ENCODE measurements at regions of chr1 and their contacts with region 1.

Region 1: DNA sequence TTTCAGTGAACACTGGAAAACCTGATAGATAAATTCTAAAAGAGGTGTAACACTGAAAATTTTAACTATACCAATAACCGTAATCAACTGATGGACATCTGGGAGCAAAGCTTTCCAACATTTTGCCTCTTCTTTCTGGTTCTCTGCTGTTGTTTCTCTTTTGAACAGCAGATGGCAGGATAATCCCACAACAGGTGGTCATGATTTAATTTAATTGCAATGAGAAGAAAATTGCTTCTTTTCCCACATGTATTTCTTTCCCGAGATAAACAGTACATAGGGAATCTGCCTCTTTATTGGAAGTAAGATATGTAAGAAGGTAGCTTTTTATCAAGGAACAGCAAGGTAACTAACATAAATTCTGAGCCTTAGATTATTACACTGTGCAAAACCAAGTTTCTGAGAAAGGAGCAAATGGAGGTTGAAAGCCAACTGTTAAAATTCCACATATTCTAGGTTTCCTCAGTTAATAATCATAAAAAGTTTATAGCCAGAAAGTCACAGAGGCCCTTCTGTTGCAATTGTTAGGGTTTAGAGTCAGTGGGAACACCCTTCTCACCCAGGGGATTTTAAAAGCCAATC is 72.9 kb downstream of the RPS6KA1 start:
- DNase-seq: peak in 2 of 10 donors; percentile 31 to 42
- H3K4me3 ChIP-seq: peak overlapping the region in 3 of 59 donors; percentile 0 to 39 (median 34)
- H3K27ac ChIP-seq: peak overlapping the region in 2 of 59 donors; percentile 4 to 5
- H3K27me3 ChIP-seq: no peaks in the 10 kb centered on the region
- CTCF ChIP-seq: peak; percentile 82 to 99 (median 94)

Region 2: DNA sequence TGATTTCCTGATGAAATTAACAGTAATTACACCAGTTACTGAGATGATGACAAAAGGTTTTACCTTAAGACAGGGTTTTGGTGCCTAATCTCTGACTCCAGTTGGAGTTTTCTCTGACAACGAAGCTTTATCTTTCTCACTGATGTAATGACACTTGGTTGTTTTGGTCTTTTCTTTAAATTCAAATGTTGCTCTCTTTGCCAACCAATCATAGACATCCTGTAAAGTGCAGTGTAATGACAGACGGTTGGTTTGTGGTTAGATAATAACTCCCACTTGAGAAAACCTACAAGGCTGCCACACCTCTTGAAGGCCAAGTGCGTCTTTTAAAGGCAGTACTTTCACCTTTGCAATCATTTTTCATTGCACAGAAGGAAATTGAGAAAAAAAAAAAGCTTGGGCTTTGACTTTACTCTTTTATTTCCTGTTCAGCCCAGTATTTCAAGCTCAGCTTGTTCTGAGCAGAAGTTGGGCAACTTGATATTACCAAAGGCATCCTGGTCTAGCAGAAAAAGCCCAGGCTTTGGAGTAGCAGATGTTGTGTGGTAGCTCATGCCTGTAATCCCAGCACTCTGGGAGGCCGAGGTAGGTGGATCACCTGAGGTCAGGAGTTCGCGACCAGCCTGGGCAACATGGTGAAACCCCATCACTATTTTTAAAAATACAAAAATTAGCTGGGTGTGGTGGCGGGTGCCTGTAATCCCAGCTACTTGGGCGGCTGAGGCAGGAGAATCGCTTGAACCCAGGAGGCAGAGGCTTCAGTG is 476.0 kb before region 1 on chr1:
- intact Hi-C with region 1: no loop called
- DNase-seq: no peak
- H3K4me3 ChIP-seq: peak overlapping the region in 7 of 59 donors; percentile 4 to 32 (median 18)
- H3K27ac ChIP-seq: peak overlapping the region in 34 of 59 donors; percentile 2 to 72 (median 44)
- H3K27me3 ChIP-seq: no peaks in the 10 kb centered on the region
- CTCF ChIP-seq: no peak

Region 3: DNA sequence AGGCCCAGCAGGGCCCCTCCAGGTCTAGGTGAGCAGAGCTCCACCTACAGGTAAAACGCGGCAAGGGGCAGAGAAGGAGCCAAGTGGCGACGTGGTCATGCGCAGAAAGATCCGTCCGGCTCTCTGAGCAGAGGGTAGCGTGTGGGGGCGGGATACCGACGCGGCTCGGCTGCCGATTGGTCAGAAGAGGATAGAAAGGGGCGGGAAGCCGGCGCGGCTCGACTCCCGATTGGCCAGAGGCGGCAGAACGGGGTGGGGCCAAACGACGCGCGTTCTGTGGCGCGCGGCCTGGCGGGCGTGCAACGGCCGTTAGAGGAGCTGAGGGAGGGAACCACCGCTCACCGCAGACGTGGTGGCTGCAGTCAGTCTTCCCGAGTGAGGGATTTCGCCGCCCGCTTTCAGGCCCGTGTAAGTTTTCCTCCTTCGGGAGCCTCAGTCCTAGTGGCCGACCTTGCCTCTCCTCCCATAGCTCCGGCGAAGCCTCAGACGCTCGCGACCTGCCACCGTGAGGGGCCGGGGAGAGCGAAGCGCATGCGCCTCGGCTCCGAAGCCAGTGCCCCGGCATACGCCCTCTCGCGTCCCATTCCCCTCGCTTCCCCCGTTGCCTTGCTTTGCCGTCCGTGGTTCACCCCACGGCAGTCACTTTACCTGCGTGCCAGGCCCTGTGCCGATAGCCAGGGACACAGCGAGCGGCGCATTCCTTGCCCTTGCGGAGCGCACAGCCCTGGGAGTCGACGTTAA is 368.4 kb before region 1 on chr1 and contains the start of gene CEP85:
- intact Hi-C with region 1: no loop called
- DNase-seq: peak; percentile 97 to 100 (median 99)
- H3K4me3 ChIP-seq: peak within 1 kb of the TSS; percentile 60 to 100 (median 88)
- H3K27ac ChIP-seq: peak within 1 kb of the TSS; percentile 46 to 99 (median 89)
- H3K27me3 ChIP-seq: no peaks in the 10 kb centered on the region
- CTCF ChIP-seq: peak; percentile 48 to 93 (median 84)
- total RNA-seq, gene CEP85: 11.3 to 55.4 (median 22.9) TPM

Region 4: GRCh38 chr1:26450908-26451307 is 151.6 kb before region 1 on chr1:
- intact Hi-C with region 1: no loop called
- DNase-seq: no peak
- H3K4me3 ChIP-seq: no peak overlapping the region
- H3K27ac ChIP-seq: no peak overlapping the region
- H3K27me3 ChIP-seq: no peaks in the 10 kb centered on the region
- CTCF ChIP-seq: no peak

Region 5: GRCh38 chr1:26500488-26501175 is 101.8 kb before region 1 on chr1:
- intact Hi-C with region 1: loop called (anchors 2 to 5 kb)
- DNase-seq: peak; percentile 77 to 91 (median 82)
- H3K4me3 ChIP-seq: peak overlapping the region; percentile 63 to 96 (median 87)
- H3K27ac ChIP-seq: peak overlapping the region; percentile 74 to 98 (median 92)
- H3K27me3 ChIP-seq: no peaks in the 10 kb centered on the region
- CTCF ChIP-seq: peak in 31 of 56 donors; percentile 0 to 75 (median 31)

Region 6: GRCh38 chr1:26582836-26583460 is 19.5 kb before region 1 on chr1:
- intact Hi-C with region 1: no loop called
- DNase-seq: no peak
- H3K4me3 ChIP-seq: no peak overlapping the region
- H3K27ac ChIP-seq: no peak overlapping the region
- H3K27me3 ChIP-seq: no peaks in the 10 kb centered on the region
- CTCF ChIP-seq: no peak

Region 7: GRCh38 chr1:26616881-26617280 is 14.4 kb after region 1 on chr1:
- intact Hi-C with region 1: loop called in 1 of 2 experiments (anchors 1 kb)
- DNase-seq: no peak
- H3K4me3 ChIP-seq: no peak overlapping the region
- H3K27ac ChIP-seq: no peak overlapping the region
- H3K27me3 ChIP-seq: no peaks in the 10 kb centered on the region
- CTCF ChIP-seq: no peak

Region 8: DNA sequence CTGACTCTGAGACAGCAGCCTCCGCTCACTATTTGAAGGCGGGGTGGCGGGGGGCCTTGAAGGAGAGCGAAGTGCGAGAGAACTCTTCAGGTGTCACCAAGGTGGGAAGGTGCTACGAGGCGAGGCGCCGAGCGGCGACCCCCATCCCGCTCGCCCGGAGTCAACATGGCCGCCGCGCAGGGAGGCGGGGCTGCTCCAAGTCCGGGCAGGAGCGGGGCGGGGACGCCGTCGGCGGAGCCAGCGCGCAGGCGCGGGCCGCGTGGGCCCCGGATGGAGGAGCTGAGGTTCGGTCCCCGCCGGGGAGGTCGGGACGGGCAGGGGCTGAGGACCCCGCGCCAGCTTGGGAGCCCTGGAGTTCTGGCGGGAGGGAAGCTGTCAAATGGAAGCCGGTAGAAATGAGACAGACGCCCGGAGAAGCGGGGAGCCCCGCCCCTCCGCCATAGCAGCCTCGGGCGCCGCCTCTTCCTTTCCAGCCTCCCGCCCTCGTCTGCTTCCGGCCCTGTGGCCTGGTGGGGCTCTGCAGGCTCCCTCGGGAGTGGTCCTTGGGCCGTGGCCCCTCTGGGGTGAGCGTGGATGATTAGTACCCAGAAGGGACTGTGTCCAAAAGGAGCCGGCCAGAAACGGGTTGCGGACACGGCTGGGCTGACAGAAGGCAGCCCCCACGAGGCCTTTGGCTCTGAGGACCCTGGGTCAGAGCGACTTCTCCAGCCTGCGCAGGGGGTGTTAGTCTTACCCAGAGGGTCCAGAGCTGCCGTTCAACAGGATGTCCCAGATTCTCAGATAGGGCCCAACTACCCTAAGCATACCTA is 185.4 kb after region 1 on chr1 and contains the start of gene PIGV:
- intact Hi-C with region 1: loop called (anchors 1 to 2 kb)
- DNase-seq: peak; percentile 75 to 90 (median 84)
- H3K4me3 ChIP-seq: peak within 1 kb of the TSS; percentile 65 to 98 (median 87)
- H3K27ac ChIP-seq: peak within 1 kb of the TSS; percentile 95 to 100 (median 100)
- H3K27me3 ChIP-seq: no peaks in the 10 kb centered on the region
- CTCF ChIP-seq: peak in 50 of 56 donors; percentile 10 to 63 (median 44)
- total RNA-seq, gene PIGV: 9.1 to 22.9 (median 14.3) TPM

Region 9: DNA sequence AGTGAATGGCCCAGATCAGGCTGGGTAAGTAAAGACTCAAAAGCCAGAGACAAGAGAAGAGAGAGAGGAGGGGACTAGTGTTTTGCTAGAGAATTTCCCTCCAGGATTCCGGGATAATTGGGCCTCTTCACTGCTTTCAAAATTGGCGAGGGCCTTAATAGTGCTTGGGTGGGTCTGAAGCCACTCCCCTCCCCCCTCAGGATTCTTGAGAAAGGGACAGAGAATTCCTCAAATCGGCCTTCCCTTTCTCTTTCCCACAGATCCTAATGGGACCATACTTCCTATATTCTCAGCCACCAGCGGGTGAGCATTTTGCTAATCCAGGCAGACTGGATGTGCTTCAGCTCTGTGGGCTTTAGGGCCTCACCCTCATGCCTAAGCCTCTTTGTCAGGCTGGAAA is 272.4 kb after region 1 on chr1:
- intact Hi-C with region 1: loop called in 1 of 2 experiments (anchors 2 kb)
- DNase-seq: no peak
- H3K4me3 ChIP-seq: no peak overlapping the region
- H3K27ac ChIP-seq: no peak overlapping the region
- H3K27me3 ChIP-seq: no peaks in the 10 kb centered on the region
- CTCF ChIP-seq: no peak

Measured in dorsolateral prefrontal cortex (tissue), 120 donors.